Astrocyte of the cerebellum (primary cell): ENCODE measurements at regions of chr3 and their contacts with region 1.

Region 1: GRCh38 chr3:141793476-141794260 is 30.5 kb downstream of the GRK7 start:
- DNase-seq: no peak
- H3K4me3 ChIP-seq: no peak overlapping the region
- CTCF ChIP-seq: peak; percentile 2

Region 2: GRCh38 chr3:141754032-141754431 is 39.6 kb before region 1 on chr3:
- in situ Hi-C with region 1: loop called (anchors 5 kb)
- DNase-seq: no peak
- H3K4me3 ChIP-seq: no peak overlapping the region
- CTCF ChIP-seq: no peak

Region 3: GRCh38 chr3:141870091-141870687 is 76.5 kb after region 1 on chr3:
- in situ Hi-C with region 1: loop called (anchors 5 kb)
- DNase-seq: no peak
- H3K4me3 ChIP-seq: no peak overlapping the region
- CTCF ChIP-seq: no peak